ENCODE measurements at regions of chr19 and their contacts with region 1.

Region 1: DNA sequence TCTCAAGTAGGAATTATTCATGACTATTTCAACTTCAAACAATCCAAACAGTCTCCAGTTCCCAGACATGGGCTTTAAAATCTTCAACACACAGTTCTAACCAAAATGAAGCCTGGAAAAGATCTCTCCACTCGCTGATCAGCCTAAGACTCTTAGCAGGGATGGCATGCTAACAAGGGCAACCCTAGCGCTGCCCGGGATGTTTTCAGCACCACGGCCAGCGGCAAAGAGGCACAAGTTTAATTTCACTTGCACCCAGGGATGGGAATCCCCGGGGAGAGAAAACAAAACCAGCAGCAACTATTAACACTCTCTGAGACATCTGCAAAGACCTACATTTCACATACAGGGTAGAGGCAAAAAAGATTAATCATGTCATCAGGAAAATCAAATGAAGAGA is 43.0 kb downstream of the CACNA1A start:
- DNase-seq: peak; percentile 47
- ATAC-seq: no peak
- H3K4me3 Mint-ChIP-seq: no peak overlapping the region
- H3K27ac Mint-ChIP-seq: no peak overlapping the region
- H3K4me1 Mint-ChIP-seq: no peaks in the 10 kb centered on the region
- H3K27me3 Mint-ChIP-seq: peaks cover 12% of the 10 kb centered on the region

Region 2: GRCh38 chr19:13396250-13397080 is 66.8 kb before region 1 on chr19:
- CTCF ChIA-PET with region 1: no interaction called
- POLR2A ChIA-PET with region 1: no interaction called
- intact Hi-C with region 1: no loop called
- DNase-seq: peak; percentile 10
- ATAC-seq: no peak
- H3K4me3 Mint-ChIP-seq: no peak overlapping the region
- H3K27ac Mint-ChIP-seq: no peak overlapping the region
- H3K4me1 Mint-ChIP-seq: no peaks in the 10 kb centered on the region
- H3K27me3 Mint-ChIP-seq: peaks cover 35% of the 10 kb centered on the region

Region 3: GRCh38 chr19:13441810-13442512 is 21.3 kb before region 1 on chr19:
- CTCF ChIA-PET with region 1: no interaction called
- POLR2A ChIA-PET with region 1: no interaction called
- intact Hi-C with region 1: loop called in 1 of 2 experiments (anchors 1 kb)
- DNase-seq: peak; percentile 74
- ATAC-seq: no peak
- H3K4me3 Mint-ChIP-seq: no peak overlapping the region
- H3K27ac Mint-ChIP-seq: no peak overlapping the region
- H3K4me1 Mint-ChIP-seq: no peaks in the 10 kb centered on the region
- H3K27me3 Mint-ChIP-seq: peaks cover 12% of the 10 kb centered on the region

Region 4: GRCh38 chr19:13557756-13558398 is 94.6 kb after region 1 on chr19:
- CTCF ChIA-PET with region 1: no interaction called
- POLR2A ChIA-PET with region 1: no interaction called
- intact Hi-C with region 1: no loop called
- DNase-seq: peak; percentile 28
- ATAC-seq: peak; percentile 51
- H3K4me3 Mint-ChIP-seq: no peak overlapping the region
- H3K27ac Mint-ChIP-seq: no peak overlapping the region
- H3K4me1 Mint-ChIP-seq: no peaks in the 10 kb centered on the region
- H3K27me3 Mint-ChIP-seq: peaks cover 11% of the 10 kb centered on the region

Measured in activated CD4-positive, alpha-beta T cell treated with anti-CD3 and anti-CD28 coated beads for 36 hours (primary cell).